PC-3 (cell line): ENCODE measurements at regions of chr17 and their contacts with region 1.

Region 1: DNA sequence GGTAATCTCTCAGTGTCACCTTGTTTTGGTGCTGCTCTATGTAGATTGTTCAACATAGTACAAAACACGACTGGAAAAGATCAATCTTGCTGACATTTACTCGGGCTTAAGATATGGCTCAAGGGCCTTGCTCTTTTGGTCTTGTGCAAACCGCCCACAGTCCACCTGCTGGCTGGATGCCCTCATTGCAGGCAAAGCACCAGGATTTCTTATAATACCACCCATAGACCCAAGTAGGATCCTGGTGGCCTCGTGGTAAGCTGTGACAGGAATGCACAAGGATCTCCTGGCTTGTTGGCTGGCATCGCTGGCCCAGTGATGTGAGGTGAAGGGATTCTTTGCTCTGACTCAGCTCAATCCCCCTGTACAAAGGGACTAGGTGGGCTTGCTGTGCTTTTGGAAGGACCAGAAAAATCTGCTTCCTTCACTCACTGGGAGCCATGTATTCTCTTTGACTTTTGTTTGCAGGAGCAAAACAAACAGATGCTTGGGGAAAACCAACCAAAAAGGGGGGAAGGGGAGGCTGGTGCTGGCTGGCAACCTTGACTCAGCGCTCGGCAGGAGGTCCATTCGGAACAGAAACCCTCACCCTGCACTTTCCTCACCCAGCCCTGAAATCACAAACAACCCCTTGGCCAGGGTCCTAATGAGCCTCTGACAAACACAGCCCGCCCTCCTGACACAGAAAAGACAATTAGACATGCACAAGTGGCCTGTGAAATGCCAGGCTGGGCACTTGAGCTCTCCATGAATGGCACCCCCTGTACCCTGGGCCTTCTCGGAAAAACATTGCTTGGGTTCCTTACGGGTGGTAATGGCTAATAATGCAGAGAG is 36.6 kb upstream of the MED9 start:
- DNase-seq: peak; percentile 78
- ATAC-seq: peak; percentile 24; the same call in 1 of the 2 replicates
- H3K4me3 ChIP-seq: no peak overlapping the region
- H3K27ac ChIP-seq: no peak overlapping the region
- H3K4me1 ChIP-seq: peaks cover 30% of the 10 kb centered on the region
- H3K27me3 ChIP-seq: no peaks in the 10 kb centered on the region
- CTCF ChIP-seq: peak; percentile 82

Region 2: GRCh38 chr17:17356149-17356930 is 83.9 kb before region 1 on chr17:
- CTCF ChIA-PET with region 1: no interaction called
- POLR2A ChIA-PET with region 1: no interaction called
- intact Hi-C with region 1: loop called (anchors 2 kb)
- DNase-seq: peak; percentile 94
- ATAC-seq: peak; percentile 81
- H3K4me3 ChIP-seq: no peak overlapping the region
- H3K27ac ChIP-seq: no peak overlapping the region
- H3K4me1 ChIP-seq: peaks cover 7% of the 10 kb centered on the region; the same call in 1 of the 2 replicates
- H3K27me3 ChIP-seq: no peaks in the 10 kb centered on the region
- CTCF ChIP-seq: peak; percentile 99

Region 3: GRCh38 chr17:17472333-17472920 is 32.2 kb after region 1 on chr17:
- CTCF ChIA-PET with region 1: interaction called, 7 read pairs
- POLR2A ChIA-PET with region 1: no interaction called
- intact Hi-C with region 1: loop called (anchors 1 kb)
- DNase-seq: peak; percentile 28
- ATAC-seq: no peak
- H3K4me3 ChIP-seq: no peak overlapping the region
- H3K27ac ChIP-seq: no peak overlapping the region
- H3K4me1 ChIP-seq: peaks cover 6% of the 10 kb centered on the region
- H3K27me3 ChIP-seq: peaks cover 7% of the 10 kb centered on the region; the same call in 1 of the 2 replicates
- CTCF ChIP-seq: no peak